Naive thymus-derived CD4-positive, alpha-beta T cell (primary cell): ENCODE measurements at regions of chr15 and their contacts with region 1.

Region 1: DNA sequence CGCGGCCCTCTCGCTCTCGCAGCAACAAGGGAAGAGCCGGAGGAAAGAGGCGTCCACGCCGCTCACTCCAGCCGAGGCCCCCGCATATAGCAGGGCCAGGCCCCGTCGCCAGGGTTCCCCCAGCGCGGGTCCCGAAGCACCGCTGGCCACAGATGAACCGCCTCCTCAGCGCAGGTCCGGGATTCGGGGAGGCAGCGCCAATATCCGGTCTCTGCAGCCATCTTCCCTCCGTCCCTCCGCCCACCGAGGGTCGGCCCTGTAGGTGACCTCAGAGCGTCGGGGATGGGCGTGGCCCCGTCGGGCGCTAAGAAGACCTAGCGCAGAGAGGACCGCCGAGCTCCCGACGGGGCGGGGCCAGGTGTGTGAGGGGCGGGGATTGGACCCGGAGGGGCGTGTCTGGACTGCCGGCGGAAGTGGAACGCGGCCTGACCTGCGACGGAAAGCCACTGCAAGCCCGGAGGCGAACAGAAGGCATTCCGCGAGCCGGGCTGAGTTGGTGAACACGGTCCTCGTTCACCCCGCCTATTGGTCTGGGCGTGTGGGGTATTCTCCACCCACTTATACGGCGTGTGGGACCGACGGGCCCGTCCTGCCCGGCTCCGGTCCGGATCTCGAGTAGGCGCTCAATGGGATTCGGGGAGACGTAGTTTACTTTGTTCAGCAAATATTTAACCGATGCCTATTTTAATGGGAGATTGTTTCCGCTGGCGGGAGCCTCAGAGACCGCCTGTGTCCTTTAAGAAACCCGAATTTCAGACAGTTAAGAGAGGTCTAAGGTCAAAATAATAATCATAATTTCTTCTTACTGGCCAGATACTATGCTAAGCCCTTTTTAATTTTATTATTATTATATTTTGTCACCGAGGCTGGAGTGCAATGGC is 26.9 kb upstream of the MTHFS start:
- DNase-seq: peak; percentile 95 to 100 (median 99)
- ATAC-seq: peak; percentile 98
- H3K4me3 ChIP-seq: peak overlapping the region; percentile 98
- H3K4me3 Mint-ChIP-seq: peak overlapping the region; percentile 90 to 98 (median 94)
- H3K27ac ChIP-seq: peak overlapping the region; percentile 96
- H3K27ac Mint-ChIP-seq: peak overlapping the region; percentile 95 to 98 (median 97)
- H3K4me1 ChIP-seq: peaks cover 11 to 14% of the 10 kb centered on the region in 2 donors
- H3K4me1 Mint-ChIP-seq: peaks cover 9 to 30% (median 24%) of the 10 kb centered on the region in 7 donors
- H3K27me3 ChIP-seq: no peaks in the 10 kb centered on the region
- H3K27me3 Mint-ChIP-seq: no peaks in the 10 kb centered on the region

Region 2: GRCh38 chr15:79310983-79311900 is 612.5 kb before region 1 on chr15 and contains the start of gene TMED3:
- CTCF ChIA-PET with region 1: no interaction called
- POLR2A ChIA-PET with region 1: interaction called, 4 read pairs
- intact Hi-C with region 1: loop called (anchors 1 to 5 kb)
- DNase-seq: peak; percentile 58 to 85 (median 79)
- ATAC-seq: peak; percentile 92
- H3K4me3 ChIP-seq: peak within 1 kb of the TSS; percentile 90
- H3K4me3 Mint-ChIP-seq: peak within 1 kb of the TSS; percentile 85 to 93 (median 90)
- H3K27ac ChIP-seq: peak within 1 kb of the TSS; percentile 62
- H3K27ac Mint-ChIP-seq: peak within 1 kb of the TSS; percentile 4 to 74 (median 66)
- H3K4me1 ChIP-seq: peaks cover 13 to 20% of the 10 kb centered on the region in 2 donors
- H3K4me1 Mint-ChIP-seq: peaks cover 24 to 52% (median 46%) of the 10 kb centered on the region in 7 donors
- H3K27me3 ChIP-seq: no peaks in the 10 kb centered on the region
- H3K27me3 Mint-ChIP-seq: peaks cover 0 to 29% (median 4%) of the 10 kb centered on the region in 5 donors
- total RNA-seq, gene TMED3: 18.6 to 40.5 (median 21.1) TPM

Region 3: GRCh38 chr15:79834495-79834894 is 89.3 kb before region 1 on chr15:
- CTCF ChIA-PET with region 1: no interaction called
- POLR2A ChIA-PET with region 1: no interaction called
- intact Hi-C with region 1: no loop called
- DNase-seq: no peak
- ATAC-seq: no peak
- H3K4me3 ChIP-seq: no peak overlapping the region
- H3K4me3 Mint-ChIP-seq: no peak overlapping the region
- H3K27ac ChIP-seq: no peak overlapping the region
- H3K27ac Mint-ChIP-seq: no peak overlapping the region
- H3K4me1 ChIP-seq: no peaks in the 10 kb centered on the region
- H3K4me1 Mint-ChIP-seq: peaks cover 0 to 21% (median 5%) of the 10 kb centered on the region in 7 donors
- H3K27me3 ChIP-seq: no peaks in the 10 kb centered on the region
- H3K27me3 Mint-ChIP-seq: no peaks in the 10 kb centered on the region

Region 4: GRCh38 chr15:79872358-79873017 is 51.3 kb before region 1 on chr15:
- CTCF ChIA-PET with region 1: no interaction called
- POLR2A ChIA-PET with region 1: interaction called, 3 read pairs
- intact Hi-C with region 1: loop called in 1 of 2 experiments (anchors 10 kb)
- DNase-seq: peak in 7 of 9 donors; percentile 23 to 58 (median 46)
- ATAC-seq: peak; percentile 91
- H3K4me3 ChIP-seq: no peak overlapping the region
- H3K4me3 Mint-ChIP-seq: peak overlapping the region in 6 of 10 donors; percentile 38 to 42 (median 41)
- H3K27ac ChIP-seq: no peak overlapping the region
- H3K27ac Mint-ChIP-seq: peak overlapping the region in 8 of 9 donors; percentile 32 to 92 (median 56)
- H3K4me1 ChIP-seq: peaks cover 5 to 6% of the 10 kb centered on the region in 2 donors
- H3K4me1 Mint-ChIP-seq: peaks cover 20 to 44% (median 24%) of the 10 kb centered on the region in 7 donors
- H3K27me3 ChIP-seq: no peaks in the 10 kb centered on the region
- H3K27me3 Mint-ChIP-seq: no peaks in the 10 kb centered on the region

Region 5: GRCh38 chr15:79896637-79897379 is 26.9 kb before region 1 on chr15 and contains the start of gene MTHFS:
- CTCF ChIA-PET with region 1: interaction called, 3 read pairs
- POLR2A ChIA-PET with region 1: interaction called, 136 read pairs
- intact Hi-C with region 1: loop called (anchors 1 kb)
- DNase-seq: peak; percentile 73 to 87 (median 83)
- ATAC-seq: peak; percentile 92
- H3K4me3 ChIP-seq: peak within 1 kb of the TSS; percentile 71
- H3K4me3 Mint-ChIP-seq: peak within 1 kb of the TSS; percentile 91 to 100 (median 99)
- H3K27ac ChIP-seq: peak within 1 kb of the TSS; percentile 92
- H3K27ac Mint-ChIP-seq: peak within 1 kb of the TSS; percentile 97 to 100 (median 100)
- H3K4me1 ChIP-seq: peaks cover 20 to 23% of the 10 kb centered on the region in 2 donors
- H3K4me1 Mint-ChIP-seq: peaks cover 28 to 49% (median 46%) of the 10 kb centered on the region in 7 donors
- H3K27me3 ChIP-seq: no peaks in the 10 kb centered on the region
- H3K27me3 Mint-ChIP-seq: no peaks in the 10 kb centered on the region
- total RNA-seq, gene MTHFS: 15.8 to 31.8 (median 20.3) TPM

Region 6: GRCh38 chr15:79953951-79954444 is 30.2 kb after region 1 on chr15:
- CTCF ChIA-PET with region 1: no interaction called
- POLR2A ChIA-PET with region 1: no interaction called
- intact Hi-C with region 1: no loop called
- DNase-seq: peak in 2 of 9 donors; percentile 7 to 27
- ATAC-seq: peak; percentile 82
- H3K4me3 ChIP-seq: no peak overlapping the region
- H3K4me3 Mint-ChIP-seq: peak overlapping the region in 2 of 10 donors; percentile 0 to 16
- H3K27ac ChIP-seq: no peak overlapping the region
- H3K27ac Mint-ChIP-seq: peak overlapping the region in 7 of 9 donors; percentile 1 to 79 (median 62)
- H3K4me1 ChIP-seq: peaks cover 0 to 10% of the 10 kb centered on the region in 2 donors
- H3K4me1 Mint-ChIP-seq: peaks cover 14 to 26% (median 21%) of the 10 kb centered on the region in 7 donors
- H3K27me3 ChIP-seq: no peaks in the 10 kb centered on the region
- H3K27me3 Mint-ChIP-seq: no peaks in the 10 kb centered on the region

Region 7: GRCh38 chr15:79970624-79971434 is 47.1 kb after region 1 on chr15 and contains the start of gene BCL2A1:
- CTCF ChIA-PET with region 1: interaction called, 4 read pairs
- POLR2A ChIA-PET with region 1: interaction called, 121 read pairs
- intact Hi-C with region 1: loop called (anchors 1 kb)
- DNase-seq: peak; percentile 30 to 85 (median 80)
- ATAC-seq: peak; percentile 91
- H3K4me3 ChIP-seq: peak within 1 kb of the TSS; percentile 81
- H3K4me3 Mint-ChIP-seq: peak within 1 kb of the TSS; percentile 88 to 98 (median 94)
- H3K27ac ChIP-seq: peak within 1 kb of the TSS; percentile 75
- H3K27ac Mint-ChIP-seq: peak within 1 kb of the TSS; percentile 93 to 99 (median 95)
- H3K4me1 ChIP-seq: peaks cover 27 to 39% of the 10 kb centered on the region in 2 donors
- H3K4me1 Mint-ChIP-seq: peaks cover 41 to 66% (median 58%) of the 10 kb centered on the region in 7 donors
- H3K27me3 ChIP-seq: no peaks in the 10 kb centered on the region
- H3K27me3 Mint-ChIP-seq: no peaks in the 10 kb centered on the region
- total RNA-seq, gene BCL2A1: 27.3 to 119 (median 31.0) TPM

Region 8: DNA sequence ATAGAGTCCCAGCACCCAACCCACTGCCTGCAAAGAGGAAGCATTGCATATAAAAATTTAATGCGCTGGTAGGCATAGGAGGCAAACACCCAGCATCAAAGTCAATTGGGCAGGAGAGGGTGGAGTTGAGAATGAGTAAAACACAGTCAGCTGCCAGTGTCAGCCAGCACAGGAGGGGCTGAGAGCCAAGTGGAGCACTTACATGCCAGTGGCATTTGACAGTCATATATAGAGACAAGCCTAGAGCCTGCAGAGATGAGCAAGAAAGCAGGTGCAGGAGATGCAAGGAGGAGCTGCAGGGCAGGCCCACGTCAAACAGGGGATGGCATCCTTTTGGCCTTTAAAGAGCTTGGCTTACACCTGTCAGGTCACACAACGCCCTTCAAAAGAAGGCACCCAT is 108.1 kb after region 1 on chr15:
- CTCF ChIA-PET with region 1: no interaction called
- POLR2A ChIA-PET with region 1: no interaction called
- intact Hi-C with region 1: no loop called
- DNase-seq: no peak
- ATAC-seq: no peak
- H3K4me3 ChIP-seq: no peak overlapping the region
- H3K4me3 Mint-ChIP-seq: peak overlapping the region in 1 of 10 donors; percentile 26
- H3K27ac ChIP-seq: no peak overlapping the region
- H3K27ac Mint-ChIP-seq: peak overlapping the region in 3 of 9 donors; percentile 17 to 67 (median 65)
- H3K4me1 ChIP-seq: peaks cover 7 to 17% of the 10 kb centered on the region in 2 donors
- H3K4me1 Mint-ChIP-seq: peaks cover 9 to 36% (median 23%) of the 10 kb centered on the region in 7 donors
- H3K27me3 ChIP-seq: no peaks in the 10 kb centered on the region
- H3K27me3 Mint-ChIP-seq: no peaks in the 10 kb centered on the region

Region 9: GRCh38 chr15:80072285-80072994 is 148.7 kb after region 1 on chr15:
- CTCF ChIA-PET with region 1: no interaction called
- POLR2A ChIA-PET with region 1: interaction called, 3 read pairs
- intact Hi-C with region 1: loop called in 1 of 2 experiments (anchors 1 kb)
- DNase-seq: peak in 7 of 9 donors; percentile 56 to 80 (median 63)
- ATAC-seq: peak; percentile 97
- H3K4me3 ChIP-seq: peak overlapping the region; percentile 10
- H3K4me3 Mint-ChIP-seq: peak overlapping the region; percentile 58 to 94 (median 84)
- H3K27ac ChIP-seq: peak overlapping the region; percentile 61
- H3K27ac Mint-ChIP-seq: peak overlapping the region; percentile 17 to 85 (median 65)
- H3K4me1 ChIP-seq: peaks cover 8 to 14% of the 10 kb centered on the region in 2 donors
- H3K4me1 Mint-ChIP-seq: peaks cover 36 to 89% (median 78%) of the 10 kb centered on the region in 7 donors
- H3K27me3 ChIP-seq: no peaks in the 10 kb centered on the region
- H3K27me3 Mint-ChIP-seq: no peaks in the 10 kb centered on the region

Region 10: GRCh38 chr15:80173022-80173759 is 249.4 kb after region 1 on chr15:
- CTCF ChIA-PET with region 1: no interaction called
- POLR2A ChIA-PET with region 1: no interaction called
- intact Hi-C with region 1: loop called in 1 of 2 experiments (anchors 5 kb)
- DNase-seq: peak; percentile 44 to 71 (median 64)
- ATAC-seq: peak; percentile 84
- H3K4me3 ChIP-seq: no peak overlapping the region
- H3K4me3 Mint-ChIP-seq: peak overlapping the region in 1 of 10 donors; percentile 5
- H3K27ac ChIP-seq: no peak overlapping the region
- H3K27ac Mint-ChIP-seq: peak overlapping the region in 2 of 9 donors; percentile 5 to 55
- H3K4me1 ChIP-seq: no peaks in the 10 kb centered on the region
- H3K4me1 Mint-ChIP-seq: peaks cover 0 to 2% (median 0%) of the 10 kb centered on the region in 7 donors
- H3K27me3 ChIP-seq: no peaks in the 10 kb centered on the region
- H3K27me3 Mint-ChIP-seq: no peaks in the 10 kb centered on the region